Thyroid gland (tissue), 4 donors: ENCODE measurements at regions of chr12 and their contacts with region 1.

Region 1: GRCh38 chr12:49578471-49579112 is 10.7 kb upstream of the MCRS1 start:
- DNase-seq: no peak
- H3K4me3 ChIP-seq: no peak overlapping the region
- H3K27ac ChIP-seq: no peak overlapping the region
- H3K4me1 ChIP-seq: peaks cover 13 to 22% of the 10 kb centered on the region in 2 donors
- H3K27me3 ChIP-seq: no peaks in the 10 kb centered on the region
- CTCF ChIP-seq: no peak
- POLR2A ChIP-seq: no peak

Region 2: DNA sequence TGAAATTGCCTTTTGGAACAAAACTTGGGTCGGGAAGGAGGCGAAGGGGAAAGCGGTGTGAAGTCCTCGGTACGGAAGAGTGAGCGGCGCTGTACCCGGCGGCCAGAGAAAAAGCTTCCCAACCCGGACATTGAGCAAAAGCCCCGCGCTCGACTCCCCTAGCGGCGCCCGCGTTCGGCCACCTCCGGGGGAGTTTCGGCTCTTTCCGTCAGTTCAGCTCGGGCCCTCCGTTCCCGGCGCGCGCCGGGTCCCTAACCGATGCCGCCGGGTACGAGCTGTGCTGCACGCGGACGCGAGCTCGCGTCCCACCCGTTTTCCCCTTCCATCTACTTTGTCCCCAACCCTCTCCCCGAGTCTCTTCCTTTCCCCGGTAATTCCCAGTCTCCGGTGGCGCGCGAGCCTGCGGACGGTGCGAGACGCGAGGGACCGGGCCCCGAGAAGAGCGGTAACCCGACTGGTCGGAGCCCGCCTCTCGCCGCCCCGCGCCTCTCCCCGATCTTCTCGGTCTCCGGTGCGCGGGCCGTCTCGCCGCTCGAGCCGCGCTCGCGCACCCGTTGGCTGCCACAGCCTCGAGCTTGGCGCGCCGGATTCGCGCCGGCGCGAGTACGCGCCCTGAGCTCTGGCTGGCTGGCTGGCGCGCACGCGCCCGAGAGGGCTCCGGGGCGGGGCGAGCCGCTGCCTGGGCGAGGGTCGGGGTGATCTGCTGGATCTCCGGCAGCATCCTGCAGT is 211.8 kb before region 1 on chr12:
- intact Hi-C with region 1: loop called (anchors 10 kb)
- DNase-seq: peak; percentile 85 to 87
- H3K4me3 ChIP-seq: peak overlapping the region; percentile 26 to 79 (median 79)
- H3K27ac ChIP-seq: peak overlapping the region; percentile 63 to 97 (median 95)
- H3K4me1 ChIP-seq: peaks cover 6 to 9% of the 10 kb centered on the region in 2 donors
- H3K27me3 ChIP-seq: no peaks in the 10 kb centered on the region
- CTCF ChIP-seq: peak in 4 of 6 experiments; percentile 23 to 39 (median 30)
- POLR2A ChIP-seq: peak in 1 of 2 donors; percentile 80

Region 3: DNA sequence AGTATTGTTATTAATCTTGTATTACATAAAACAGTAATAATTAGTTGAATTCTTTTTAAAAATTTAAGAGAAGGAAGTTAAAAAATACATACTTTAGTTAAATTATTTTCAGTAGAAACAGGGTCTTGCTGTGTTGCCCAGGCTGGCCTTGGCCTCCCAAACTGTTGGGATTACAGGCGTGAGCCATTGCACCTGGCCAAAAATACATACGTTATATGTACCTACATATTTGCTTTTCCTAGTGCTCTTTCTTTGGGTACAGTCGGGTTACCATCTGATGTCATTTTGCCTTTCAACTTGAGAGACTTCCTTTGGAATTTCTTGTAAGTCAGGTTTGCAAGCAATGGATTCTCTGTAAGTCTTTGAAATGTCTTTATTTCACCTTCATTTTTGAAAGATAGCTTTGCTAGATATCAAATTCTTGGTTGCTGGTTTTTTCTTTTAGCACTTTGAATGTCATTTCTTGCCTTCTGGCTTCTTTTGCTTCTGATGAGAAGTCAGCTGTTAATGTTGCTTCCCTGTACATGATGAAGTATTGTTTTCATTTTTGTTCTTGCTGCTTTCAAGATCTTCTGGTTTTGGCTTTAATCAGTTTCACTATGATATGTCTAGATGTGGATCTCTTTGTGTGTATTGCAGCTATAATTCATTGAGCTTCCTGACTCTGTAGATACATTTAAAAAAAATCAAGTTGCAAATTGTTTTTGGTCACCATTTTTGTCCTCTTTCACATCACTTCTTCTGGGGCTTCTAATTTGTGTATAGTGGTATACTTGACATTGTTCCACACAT is 126.9 kb before region 1 on chr12:
- intact Hi-C with region 1: no loop called
- DNase-seq: no peak
- H3K4me3 ChIP-seq: no peak overlapping the region
- H3K27ac ChIP-seq: no peak overlapping the region
- H3K4me1 ChIP-seq: peaks cover 0 to 12% of the 10 kb centered on the region in 2 donors
- H3K27me3 ChIP-seq: no peaks in the 10 kb centered on the region
- CTCF ChIP-seq: no peak
- POLR2A ChIP-seq: no peak